Activated CD8-positive, alpha-beta memory T cell treated with anti-CD3 and anti-CD28 coated beads, Interleukin-2, amount 10 ng/mL, durations not matched to agents 7 days and 5 days (primary cell): ENCODE measurements at regions of chr9 and their contacts with region 1.

Region 1: DNA sequence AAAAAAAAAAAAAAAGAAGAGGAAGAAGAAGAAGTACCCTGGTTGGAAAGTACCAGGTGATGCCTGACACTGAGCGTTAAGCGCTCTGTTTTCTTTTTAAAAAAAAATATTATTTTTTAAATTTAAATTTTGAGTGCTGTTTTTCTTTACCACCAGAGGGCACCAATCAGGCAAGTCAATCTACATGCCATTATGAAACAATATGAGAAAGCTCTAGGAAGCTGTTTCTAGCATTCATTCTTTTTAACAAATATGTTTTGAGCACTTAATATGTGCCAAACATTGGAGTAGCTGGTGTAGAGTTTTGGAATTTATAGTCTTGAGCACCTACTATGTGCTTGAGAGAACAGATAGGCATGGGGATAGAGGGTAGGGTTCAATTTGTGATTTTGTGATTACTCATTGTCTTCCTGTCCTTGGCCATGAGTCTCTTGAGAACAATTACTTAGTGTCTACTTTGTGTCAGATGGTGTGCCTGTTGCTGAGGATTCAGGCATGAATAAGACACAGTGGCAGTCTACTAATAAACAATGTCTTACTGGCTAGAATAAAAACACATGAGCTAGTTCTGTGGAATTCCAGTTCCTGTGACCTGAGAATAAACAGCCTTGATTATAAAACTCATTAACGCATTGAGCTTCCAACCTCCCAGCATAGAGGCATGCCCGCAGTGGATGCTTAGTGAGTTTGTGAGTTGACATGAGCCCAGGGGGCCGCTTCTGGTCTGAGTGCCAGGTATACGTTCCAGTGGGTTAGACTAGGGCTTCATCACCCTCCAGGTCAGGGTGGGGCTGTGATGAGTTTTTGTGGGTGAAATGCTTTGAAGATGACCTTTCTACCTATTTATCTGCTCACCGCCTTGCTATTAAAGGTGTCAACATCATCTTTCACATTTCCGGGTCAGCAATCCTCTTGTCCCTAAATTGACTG is 3.0 kb upstream of the UBE2R2 start:
- DNase-seq: peak; percentile 40
- ATAC-seq: no peak
- H3K4me3 Mint-ChIP-seq: no peak overlapping the region
- H3K27ac Mint-ChIP-seq: peak overlapping the region; percentile 81
- H3K4me1 Mint-ChIP-seq: peaks cover 36% of the 10 kb centered on the region
- H3K27me3 Mint-ChIP-seq: peaks cover 16% of the 10 kb centered on the region

Region 2: DNA sequence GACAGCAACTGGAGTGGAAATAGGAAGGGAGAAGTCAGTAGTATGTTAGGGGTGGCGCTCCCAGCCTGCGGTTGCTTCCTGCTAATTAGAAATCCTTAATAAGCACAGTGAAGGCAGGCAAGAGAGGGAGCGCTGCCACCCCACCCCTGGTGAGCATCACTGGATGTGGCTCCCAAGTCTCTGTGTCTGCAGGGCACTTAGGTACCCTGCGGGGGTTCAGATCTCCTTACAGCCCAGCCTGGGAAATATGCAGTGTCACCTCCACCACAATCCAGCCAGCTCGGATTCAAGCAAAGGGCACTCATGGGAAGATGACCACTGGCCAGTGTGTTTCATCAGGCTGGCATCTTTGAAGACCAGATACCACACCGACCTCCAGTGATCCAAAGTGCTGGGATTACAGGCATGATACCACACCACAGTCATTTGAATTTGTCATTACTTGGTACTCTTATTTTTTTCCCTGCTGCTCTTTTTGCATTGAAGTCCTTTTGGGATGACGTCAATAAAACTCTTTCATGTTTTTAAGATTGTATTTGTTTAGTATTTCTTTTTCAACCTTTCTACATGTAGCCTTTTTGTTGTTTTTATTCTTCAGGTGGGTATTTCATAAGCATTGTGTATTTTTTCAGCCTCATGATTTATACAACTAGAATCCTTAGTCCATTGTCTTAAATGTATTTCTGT is 199.8 kb before region 1 on chr9:
- CTCF ChIA-PET with region 1: no interaction called
- DNase-seq: no peak
- ATAC-seq: no peak
- H3K4me3 Mint-ChIP-seq: no peak overlapping the region
- H3K27ac Mint-ChIP-seq: no peak overlapping the region
- H3K4me1 Mint-ChIP-seq: peaks cover 3% of the 10 kb centered on the region
- H3K27me3 Mint-ChIP-seq: peaks cover 47% of the 10 kb centered on the region

Region 3: DNA sequence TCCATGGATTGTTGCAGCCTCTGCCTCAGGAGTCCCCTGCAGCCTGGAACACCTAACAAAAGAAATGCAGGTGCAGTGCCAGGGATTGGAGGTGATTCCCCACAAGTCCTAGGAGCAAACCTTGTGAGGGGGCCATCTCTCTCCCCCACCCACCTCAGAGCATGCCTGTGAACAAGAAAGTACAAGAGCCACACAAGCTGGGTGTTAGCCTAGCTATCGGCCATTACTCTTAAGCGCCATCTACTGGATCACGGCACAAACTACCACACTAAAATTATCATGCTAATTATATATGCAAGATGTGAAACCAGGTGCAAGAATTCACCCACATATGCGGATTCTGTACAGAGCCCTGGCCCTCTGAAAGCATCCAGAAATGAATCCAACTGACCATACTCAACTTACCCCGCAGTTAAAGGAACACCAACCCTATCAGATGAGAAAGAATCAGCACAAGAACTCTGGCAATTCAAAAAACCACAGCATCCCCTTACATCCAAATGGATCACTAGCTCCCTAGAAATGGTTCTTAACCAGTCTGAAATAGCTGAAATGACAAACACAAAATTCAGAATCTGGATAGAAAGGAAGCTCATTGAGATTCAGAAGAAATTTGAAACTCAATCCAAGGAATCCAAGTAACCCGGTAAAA is 35.2 kb before region 1 on chr9:
- CTCF ChIA-PET with region 1: interaction called, 12 read pairs
- DNase-seq: peak; percentile 68
- ATAC-seq: peak; percentile 80
- H3K4me3 Mint-ChIP-seq: no peak overlapping the region
- H3K27ac Mint-ChIP-seq: no peak overlapping the region
- H3K4me1 Mint-ChIP-seq: peaks cover 12% of the 10 kb centered on the region
- H3K27me3 Mint-ChIP-seq: peaks cover 24% of the 10 kb centered on the region

Region 4: DNA sequence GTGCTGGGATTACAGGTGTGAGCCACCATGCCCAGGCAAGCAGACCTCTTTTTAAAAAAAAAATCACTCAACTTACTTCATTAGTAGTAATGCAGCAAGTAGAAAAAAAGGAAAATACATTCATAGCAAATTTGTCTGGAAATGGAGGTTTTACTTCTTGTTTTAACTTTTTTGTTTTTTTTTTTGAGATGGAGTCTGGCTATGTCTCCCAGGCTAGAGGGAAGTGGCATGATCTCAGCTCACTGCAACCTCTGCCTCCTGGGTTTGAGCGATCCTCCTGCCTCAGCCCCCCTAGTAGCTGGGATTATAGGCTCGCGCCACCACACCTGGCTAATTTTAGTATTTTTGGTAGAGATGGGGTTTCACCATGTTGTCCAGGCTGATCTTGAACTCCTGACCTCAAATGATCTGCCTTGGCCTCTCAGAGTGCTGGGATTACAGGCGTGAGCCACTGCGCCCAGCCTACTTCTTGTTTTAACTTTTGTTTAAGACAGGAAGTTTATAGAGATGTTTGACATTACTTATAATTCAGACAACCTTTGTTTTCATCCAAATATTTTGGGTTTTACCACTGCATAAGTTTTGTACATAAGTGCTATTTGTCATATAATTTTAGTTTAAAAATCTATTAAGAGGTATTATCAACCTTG is 29.5 kb after region 1 on chr9:
- CTCF ChIA-PET with region 1: interaction called, 10 read pairs
- DNase-seq: no peak
- ATAC-seq: no peak
- H3K4me3 Mint-ChIP-seq: no peak overlapping the region
- H3K27ac Mint-ChIP-seq: no peak overlapping the region
- H3K4me1 Mint-ChIP-seq: peaks cover 19% of the 10 kb centered on the region
- H3K27me3 Mint-ChIP-seq: no peaks in the 10 kb centered on the region

Region 5: GRCh38 chr9:33852216-33852826 is 38.3 kb after region 1 on chr9:
- CTCF ChIA-PET with region 1: interaction called, 14 read pairs
- DNase-seq: peak; percentile 61
- ATAC-seq: peak; percentile 39
- H3K4me3 Mint-ChIP-seq: no peak overlapping the region
- H3K27ac Mint-ChIP-seq: no peak overlapping the region
- H3K4me1 Mint-ChIP-seq: peaks cover 19% of the 10 kb centered on the region
- H3K27me3 Mint-ChIP-seq: no peaks in the 10 kb centered on the region